CD14-positive monocyte (primary cell): ENCODE measurements at regions of chr1 and their contacts with region 1.

Region 1: GRCh38 chr1:60848583-60849188 is 233.7 kb upstream of the NFIA start:
- DNase-seq: peak; percentile 13 to 29 (median 23)
- H3K4me3 ChIP-seq: no peak overlapping the region
- H3K4me3 Mint-ChIP-seq: no peak overlapping the region
- H3K27ac ChIP-seq: no peak overlapping the region
- H3K27ac Mint-ChIP-seq: no peak overlapping the region
- H3K4me1 ChIP-seq: no peaks in the 10 kb centered on the region
- H3K4me1 Mint-ChIP-seq: no peaks in the 10 kb centered on the region
- H3K27me3 ChIP-seq: no peaks in the 10 kb centered on the region
- H3K27me3 Mint-ChIP-seq: peaks cover 0 to 2% (median 2%) of the 10 kb centered on the region in 3 donors
- CTCF ChIP-seq: peak; percentile 82

Region 2: GRCh38 chr1:60904089-60904851 is 55.6 kb after region 1 on chr1:
- intact Hi-C with region 1: no loop called
- DNase-seq: no peak
- H3K4me3 ChIP-seq: no peak overlapping the region
- H3K4me3 Mint-ChIP-seq: no peak overlapping the region
- H3K27ac ChIP-seq: no peak overlapping the region
- H3K27ac Mint-ChIP-seq: peak overlapping the region in 1 of 7 donors; percentile 68
- H3K4me1 ChIP-seq: no peaks in the 10 kb centered on the region
- H3K4me1 Mint-ChIP-seq: no peaks in the 10 kb centered on the region
- H3K27me3 ChIP-seq: no peaks in the 10 kb centered on the region
- H3K27me3 Mint-ChIP-seq: peaks cover 0 to 1% (median 0%) of the 10 kb centered on the region in 3 donors
- CTCF ChIP-seq: no peak

Region 3: DNA sequence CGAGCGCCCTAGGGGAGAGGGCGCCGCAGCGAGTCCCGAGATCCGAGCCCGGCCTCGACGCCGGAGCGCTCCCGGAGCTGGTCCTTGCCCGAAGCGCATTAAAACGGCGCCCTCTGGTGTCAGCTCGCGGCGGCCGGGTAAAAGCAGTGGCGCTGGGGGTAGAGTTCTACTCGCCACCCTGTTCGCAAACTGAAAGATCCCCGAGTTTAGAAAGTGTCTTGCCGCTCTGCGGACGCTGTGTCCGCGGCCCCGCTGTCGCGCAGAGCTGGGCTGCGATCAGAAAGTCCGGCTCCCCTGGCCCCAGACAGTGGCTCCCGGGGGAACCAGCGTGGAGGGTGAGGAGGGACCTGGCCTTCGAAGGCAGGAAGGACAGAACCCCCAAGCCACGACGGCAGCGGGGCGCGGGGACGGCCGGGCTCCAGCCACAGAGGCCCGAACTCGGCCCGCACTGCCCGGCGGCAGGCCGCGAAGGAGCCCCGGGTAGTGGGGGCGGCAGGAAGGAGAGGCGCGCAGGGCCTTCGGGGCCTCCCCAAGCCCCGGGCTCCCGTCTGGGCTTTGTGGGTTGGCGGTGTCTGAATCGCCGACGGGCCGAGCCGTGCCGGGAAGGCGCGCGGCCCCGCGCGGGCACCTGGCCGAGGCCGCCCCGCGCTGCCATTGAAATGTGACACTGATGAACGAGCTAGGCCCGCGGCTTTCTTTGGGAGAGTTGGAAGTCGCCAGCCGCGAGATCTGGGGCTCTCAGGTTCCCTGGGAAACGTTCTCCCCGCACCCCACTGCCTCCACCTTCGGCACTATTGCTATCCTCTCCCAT is 194.5 kb after region 1 on chr1:
- intact Hi-C with region 1: loop called (anchors 5 kb)
- DNase-seq: peak; percentile 70 to 79 (median 75)
- H3K4me3 ChIP-seq: peak overlapping the region; percentile 40 to 75 (median 54)
- H3K4me3 Mint-ChIP-seq: peak overlapping the region; percentile 92 to 97
- H3K27ac ChIP-seq: no peak overlapping the region
- H3K27ac Mint-ChIP-seq: peak overlapping the region in 3 of 7 donors; percentile 79 to 89 (median 88)
- H3K4me1 ChIP-seq: peaks cover 5 to 13% of the 10 kb centered on the region in 2 donors
- H3K4me1 Mint-ChIP-seq: peaks cover 9% of the 10 kb centered on the region
- H3K27me3 ChIP-seq: peaks cover 5 to 23% of the 10 kb centered on the region in 2 donors
- H3K27me3 Mint-ChIP-seq: peaks cover 21 to 23% (median 21%) of the 10 kb centered on the region in 3 donors
- CTCF ChIP-seq: peak; percentile 84